KBM-7 (cell line): ENCODE measurements at regions of chr5 and their contacts with region 1.

Region 1: GRCh38 chr5:57302164-57302563 is 128.3 kb downstream of the GPBP1 start:
- DNase-seq: peak; percentile 36

Region 2: GRCh38 chr5:57416249-57416994 is 114.3 kb after region 1 on chr5:
- in situ Hi-C with region 1: no loop called
- DNase-seq: no peak

Region 3: GRCh38 chr5:58460732-58461286 is 1158.6 kb after region 1 on chr5:
- in situ Hi-C with region 1: loop called (anchors 25 kb)
- DNase-seq: peak; percentile 95